ENCODE measurements at regions of chr17 and their contacts with region 1.

Region 1: GRCh38 chr17:700504-701094 is 14.0 kb downstream of the VPS53 start:
- DNase-seq: no peak
- H3K4me3 ChIP-seq: no peak overlapping the region
- H3K27ac ChIP-seq: no peak overlapping the region
- H3K4me1 ChIP-seq: peaks cover 0 to 16% (median 0%) of the 10 kb centered on the region in 4 donors
- H3K27me3 ChIP-seq: no peaks in the 10 kb centered on the region
- CTCF ChIP-seq: peak; percentile 68 to 77 (median 75)
- EP300 ChIP-seq: no peak
- POLR2A ChIP-seq: no peak

Region 2: DNA sequence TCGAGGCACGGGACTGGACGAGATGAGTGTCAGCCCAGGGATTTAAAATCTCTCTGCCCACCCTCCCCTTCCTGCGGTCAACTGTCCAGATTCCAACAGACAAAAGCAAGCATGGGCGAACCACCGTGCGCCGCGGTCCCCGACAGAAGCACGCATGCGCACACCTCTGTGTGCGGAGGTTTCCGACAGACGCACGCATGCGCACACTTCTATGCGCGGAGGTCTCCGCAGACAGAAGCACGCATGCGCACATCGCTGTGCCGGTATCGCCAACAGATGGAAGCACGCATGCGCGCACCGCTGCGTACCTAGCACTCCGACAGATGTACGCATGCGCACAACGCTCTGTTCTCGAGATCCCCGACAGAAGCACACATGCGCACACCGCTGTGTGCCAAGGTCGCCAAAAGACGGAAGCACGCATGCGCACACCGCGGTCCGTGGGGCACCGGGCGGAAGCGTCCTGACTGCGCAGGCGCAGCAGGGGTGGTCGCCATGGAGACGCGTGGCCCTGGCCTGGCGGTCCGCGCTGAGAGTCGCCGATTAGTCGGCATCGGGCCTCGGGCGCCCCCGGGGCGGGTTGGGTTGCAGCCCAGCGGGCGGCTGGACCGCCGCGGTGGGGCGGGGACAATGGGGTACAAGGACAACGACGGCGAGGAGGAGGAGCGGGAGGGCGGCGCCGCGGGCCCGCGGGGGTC is 290.6 kb before region 1 on chr17:
- in situ Hi-C with region 1: no loop called
- intact Hi-C with region 1: loop called (anchors 2 kb)
- DNase-seq: peak; percentile 100
- H3K4me3 ChIP-seq: peak overlapping the region; percentile 69 to 99 (median 86)
- H3K27ac ChIP-seq: peak overlapping the region; percentile 79 to 84 (median 82)
- H3K4me1 ChIP-seq: peaks cover 0 to 28% (median 16%) of the 10 kb centered on the region in 4 donors
- H3K27me3 ChIP-seq: no peaks in the 10 kb centered on the region
- CTCF ChIP-seq: no peak
- EP300 ChIP-seq: no peak
- POLR2A ChIP-seq: peak; percentile 36

Region 3: GRCh38 chr17:614653-615473 is 85.7 kb before region 1 on chr17:
- in situ Hi-C with region 1: no loop called
- intact Hi-C with region 1: no loop called
- DNase-seq: no peak
- H3K4me3 ChIP-seq: no peak overlapping the region
- H3K27ac ChIP-seq: peak overlapping the region in 1 of 4 donors; percentile 30
- H3K4me1 ChIP-seq: no peaks in the 10 kb centered on the region
- H3K27me3 ChIP-seq: no peaks in the 10 kb centered on the region
- CTCF ChIP-seq: no peak
- EP300 ChIP-seq: no peak
- POLR2A ChIP-seq: no peak

Region 4: DNA sequence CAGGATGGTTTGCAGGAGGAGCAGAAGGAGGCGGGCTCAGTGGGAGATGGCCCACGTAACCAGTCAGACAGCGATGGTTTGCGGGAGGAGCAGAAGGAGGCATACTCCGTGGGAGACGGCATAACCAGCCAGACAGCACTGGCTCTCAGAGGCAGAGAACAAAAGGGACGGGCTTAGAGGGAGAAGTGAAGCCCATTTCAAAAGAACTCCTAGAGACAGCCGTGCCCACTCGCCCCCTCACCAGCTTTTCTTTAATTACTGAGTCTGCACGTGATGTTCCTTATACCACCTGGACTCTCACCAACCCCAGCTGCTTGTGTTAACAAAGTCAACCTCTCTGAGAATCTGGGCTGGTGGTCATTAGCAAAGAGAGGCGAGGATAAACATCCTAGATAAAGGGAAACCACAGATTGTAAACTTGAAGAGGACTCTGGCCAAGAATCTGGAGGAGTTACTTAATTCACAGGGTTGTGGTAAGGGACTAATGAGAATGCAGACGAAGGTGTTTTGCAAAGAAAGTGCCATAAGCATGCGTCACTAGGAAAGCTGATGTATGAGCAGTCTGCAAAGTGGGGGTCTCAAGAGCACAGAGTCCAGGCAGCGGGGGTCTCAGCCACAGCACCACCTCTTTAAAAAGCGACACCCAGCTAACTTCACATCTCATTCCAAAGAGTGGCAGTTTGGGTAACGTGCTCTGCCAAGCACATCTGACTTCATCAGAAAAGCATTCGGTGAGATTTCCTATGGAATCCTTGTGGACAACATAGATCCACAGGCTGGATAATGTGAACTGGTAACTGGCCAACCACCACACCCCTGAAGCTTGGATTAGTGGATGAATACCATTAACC is 227.2 kb after region 1 on chr17:
- in situ Hi-C with region 1: no loop called
- intact Hi-C with region 1: no loop called
- DNase-seq: no peak
- H3K4me3 ChIP-seq: no peak overlapping the region
- H3K27ac ChIP-seq: peak overlapping the region; percentile 21 to 64 (median 63)
- H3K4me1 ChIP-seq: peaks cover 0 to 11% (median 3%) of the 10 kb centered on the region in 4 donors
- H3K27me3 ChIP-seq: no peaks in the 10 kb centered on the region
- CTCF ChIP-seq: no peak
- EP300 ChIP-seq: no peak
- POLR2A ChIP-seq: no peak